Gastrocnemius medialis (tissue), 4 donors: ENCODE measurements at regions of chr14 and their contacts with region 1.

Region 1: DNA sequence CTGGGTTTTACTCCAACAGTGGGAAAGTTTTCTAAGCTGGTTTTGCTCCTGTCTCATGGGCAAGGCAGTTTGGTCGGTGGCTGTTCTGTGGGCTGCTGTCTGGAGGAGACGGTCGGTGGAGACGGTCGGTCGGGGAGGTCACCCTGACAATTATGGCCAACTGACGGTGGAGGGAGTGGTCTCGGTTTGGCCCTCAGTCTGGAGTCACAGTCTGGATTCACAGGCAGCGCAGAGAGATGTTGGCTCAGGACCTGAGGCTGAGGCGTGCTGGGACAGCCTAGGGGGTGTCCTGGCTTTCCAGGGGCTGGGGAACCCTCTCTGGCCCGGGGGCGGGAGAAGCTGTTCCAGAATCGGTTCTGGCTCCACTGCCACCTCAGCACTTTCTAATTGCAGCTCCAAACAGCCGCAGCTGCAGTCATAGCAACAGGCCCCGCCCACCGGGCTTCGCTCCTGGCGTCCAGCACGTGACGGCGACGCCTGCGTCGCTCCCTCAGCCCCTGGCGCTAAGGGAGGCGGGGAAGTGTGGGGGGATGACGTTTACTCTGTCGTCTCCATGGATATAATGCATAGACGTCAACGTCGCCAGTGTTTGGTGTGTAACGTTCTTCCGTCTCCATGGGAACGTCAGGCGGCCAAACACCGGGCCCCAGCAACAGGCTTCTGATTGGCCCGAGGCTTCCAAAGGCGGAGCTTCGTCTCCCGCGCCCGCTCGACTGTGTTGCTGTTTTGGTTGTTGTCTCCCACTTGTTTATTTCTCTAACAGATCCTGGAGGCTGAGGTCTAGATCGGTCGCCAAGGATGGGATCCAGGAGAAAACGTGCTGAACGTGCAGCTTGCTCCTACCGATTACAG is 19.8 kb upstream of the FOS start:
- DNase-seq: peak; percentile 97 to 99
- ATAC-seq: peak; percentile 81 to 83
- H3K4me3 ChIP-seq: peak overlapping the region; percentile 43 to 64 (median 54)
- H3K27ac ChIP-seq: peak overlapping the region; percentile 86 to 96 (median 91)
- H3K4me1 ChIP-seq: peaks cover 31 to 45% of the 10 kb centered on the region in 2 donors
- H3K27me3 ChIP-seq: no peaks in the 10 kb centered on the region
- CTCF ChIP-seq: no peak
- POLR2A ChIP-seq: peak; percentile 64 to 82

Region 2: DNA sequence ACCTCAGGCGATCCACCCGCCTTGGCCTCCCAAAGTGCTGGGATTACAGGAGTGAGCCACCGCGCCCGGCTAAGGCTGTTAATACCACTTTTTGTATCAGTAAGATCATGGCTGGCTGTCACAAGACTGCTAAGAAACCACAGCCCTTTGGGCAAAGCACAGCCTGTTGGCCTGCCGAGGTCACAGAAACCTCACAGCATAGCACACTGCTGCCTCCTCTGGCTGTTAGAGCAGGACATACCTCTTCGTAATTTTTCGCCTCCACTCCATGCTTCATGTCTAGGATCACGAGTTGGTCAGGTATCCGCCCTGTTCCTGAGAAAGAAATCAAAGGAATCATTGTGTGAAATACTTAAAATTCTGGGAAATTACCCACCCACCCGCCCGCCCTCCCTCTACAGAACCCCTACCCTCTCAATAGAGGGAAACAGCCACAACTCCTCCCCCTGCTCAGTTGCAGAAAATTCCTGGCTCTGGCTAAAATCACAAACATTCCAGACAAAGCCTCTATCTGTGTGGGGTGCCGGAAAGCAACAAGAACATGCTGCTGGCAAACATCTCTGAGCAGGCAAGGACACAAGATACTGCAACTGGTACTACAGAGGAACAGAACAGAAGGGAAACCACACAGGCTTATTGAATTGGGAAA is 111.3 kb before region 1 on chr14:
- in situ Hi-C with region 1: loop called in 1 of 4 experiments (anchors 10 kb)
- intact Hi-C with region 1: loop called (anchors 2 kb)
- DNase-seq: peak; percentile 75 to 80
- ATAC-seq: peak; percentile 38 to 49
- H3K4me3 ChIP-seq: peak overlapping the region in 1 of 4 donors; percentile 15
- H3K27ac ChIP-seq: peak overlapping the region; percentile 89 to 95 (median 92)
- H3K4me1 ChIP-seq: peaks cover 81 to 83% of the 10 kb centered on the region in 2 donors
- H3K27me3 ChIP-seq: no peaks in the 10 kb centered on the region
- CTCF ChIP-seq: peak in 2 of 5 experiments; percentile 21 to 29
- POLR2A ChIP-seq: peak in 1 of 2 donors; percentile 11

Region 3: DNA sequence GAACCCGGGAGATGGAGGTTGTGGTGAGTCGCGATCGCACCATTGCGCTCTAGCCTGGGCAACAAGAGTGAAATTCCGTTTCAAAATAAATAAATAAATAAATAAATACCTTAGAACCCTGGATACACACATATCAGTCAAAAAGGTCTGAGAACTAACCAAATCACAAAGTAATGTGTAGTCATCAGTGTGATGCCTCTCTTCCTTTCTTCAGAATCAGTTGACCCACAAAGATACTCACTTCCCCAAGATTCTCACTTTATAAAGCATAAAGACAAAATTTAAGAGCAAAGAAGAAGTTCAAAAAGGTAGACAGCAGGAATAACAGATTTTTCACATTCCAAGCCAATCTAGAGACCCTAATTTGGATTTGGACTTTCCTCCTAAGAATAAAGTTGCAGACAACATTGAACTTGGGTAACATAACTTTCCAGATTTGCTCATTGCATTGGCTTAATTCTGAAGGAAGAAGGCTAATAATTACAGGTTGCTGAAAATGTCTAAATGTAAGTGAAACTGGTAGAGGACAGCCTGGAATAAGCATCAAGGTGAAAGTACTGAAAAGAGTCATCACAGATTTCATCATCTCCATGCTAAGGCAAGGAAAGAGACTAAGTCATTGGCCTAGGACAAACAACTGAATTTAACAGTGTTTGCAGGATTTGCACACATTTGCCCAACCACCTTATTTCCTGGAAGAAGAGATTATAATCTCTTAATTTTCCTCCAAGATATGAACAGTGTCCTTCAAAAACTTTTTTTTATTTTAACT is 99.8 kb before region 1 on chr14:
- in situ Hi-C with region 1: loop called in 1 of 4 experiments (anchors 10 kb)
- intact Hi-C with region 1: no loop called
- DNase-seq: no peak
- ATAC-seq: peak; percentile 30 to 67
- H3K4me3 ChIP-seq: no peak overlapping the region
- H3K27ac ChIP-seq: peak overlapping the region; percentile 49 to 71 (median 57)
- H3K4me1 ChIP-seq: peaks cover 23 to 34% of the 10 kb centered on the region in 2 donors
- H3K27me3 ChIP-seq: no peaks in the 10 kb centered on the region
- CTCF ChIP-seq: no peak
- POLR2A ChIP-seq: no peak

Region 4: GRCh38 chr14:75176142-75176820 is 82.6 kb before region 1 on chr14 and contains the start of gene TMED10:
- in situ Hi-C with region 1: no loop called
- intact Hi-C with region 1: loop called (anchors 1 kb)
- DNase-seq: peak; percentile 86 to 87
- ATAC-seq: peak; percentile 93
- H3K4me3 ChIP-seq: peak within 1 kb of the TSS; percentile 78 to 97 (median 92)
- H3K27ac ChIP-seq: peak within 1 kb of the TSS; percentile 98 to 100 (median 98)
- H3K4me1 ChIP-seq: peaks cover 33 to 35% of the 10 kb centered on the region in 2 donors
- H3K27me3 ChIP-seq: no peaks in the 10 kb centered on the region
- CTCF ChIP-seq: peak in 2 of 5 experiments; percentile 12 to 15
- POLR2A ChIP-seq: peak; percentile 84 to 88
- total RNA-seq, gene TMED10: 161 to 362 (median 255) TPM

Region 5: DNA sequence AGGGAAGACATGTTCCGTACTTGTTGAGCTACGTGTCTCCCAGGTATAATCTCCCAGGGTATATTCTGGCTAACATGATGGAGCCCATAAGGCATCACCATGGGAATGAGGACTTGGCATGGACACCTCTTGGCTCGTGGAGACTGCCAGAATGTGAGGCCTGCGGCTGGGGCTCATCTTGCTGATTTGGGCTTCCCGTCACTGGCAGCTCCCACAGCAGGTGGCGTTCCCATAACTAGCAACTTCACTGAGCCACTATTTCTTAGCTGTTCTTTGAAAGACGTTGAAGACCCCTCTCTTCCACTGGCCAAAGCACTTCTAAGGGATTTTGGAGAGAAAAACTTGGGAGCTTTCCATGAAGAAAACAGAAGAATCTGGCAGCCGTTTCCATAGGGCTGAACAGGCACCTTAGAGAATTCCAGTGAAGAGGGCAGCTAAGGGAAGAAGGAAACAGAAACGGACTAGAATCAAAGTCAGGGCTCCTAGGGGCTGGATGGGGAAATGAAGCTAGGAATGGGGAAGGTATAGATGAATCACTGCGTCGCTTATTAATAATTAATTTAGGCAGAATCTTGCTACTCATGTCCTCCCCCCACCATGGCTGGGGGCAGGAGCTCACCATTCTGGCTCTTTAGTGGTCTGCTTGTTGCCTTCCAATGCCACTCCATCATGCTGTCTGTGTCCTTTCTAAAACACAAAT is 19.9 kb before region 1 on chr14:
- in situ Hi-C with region 1: no loop called
- intact Hi-C with region 1: loop called (anchors 1 kb)
- DNase-seq: no peak
- ATAC-seq: no peak
- H3K4me3 ChIP-seq: no peak overlapping the region
- H3K27ac ChIP-seq: peak overlapping the region; percentile 87 to 98 (median 93)
- H3K4me1 ChIP-seq: peaks cover 40 to 43% of the 10 kb centered on the region in 2 donors
- H3K27me3 ChIP-seq: no peaks in the 10 kb centered on the region
- CTCF ChIP-seq: peak in 4 of 5 experiments; percentile 14 to 37 (median 22)
- POLR2A ChIP-seq: no peak

Region 6: DNA sequence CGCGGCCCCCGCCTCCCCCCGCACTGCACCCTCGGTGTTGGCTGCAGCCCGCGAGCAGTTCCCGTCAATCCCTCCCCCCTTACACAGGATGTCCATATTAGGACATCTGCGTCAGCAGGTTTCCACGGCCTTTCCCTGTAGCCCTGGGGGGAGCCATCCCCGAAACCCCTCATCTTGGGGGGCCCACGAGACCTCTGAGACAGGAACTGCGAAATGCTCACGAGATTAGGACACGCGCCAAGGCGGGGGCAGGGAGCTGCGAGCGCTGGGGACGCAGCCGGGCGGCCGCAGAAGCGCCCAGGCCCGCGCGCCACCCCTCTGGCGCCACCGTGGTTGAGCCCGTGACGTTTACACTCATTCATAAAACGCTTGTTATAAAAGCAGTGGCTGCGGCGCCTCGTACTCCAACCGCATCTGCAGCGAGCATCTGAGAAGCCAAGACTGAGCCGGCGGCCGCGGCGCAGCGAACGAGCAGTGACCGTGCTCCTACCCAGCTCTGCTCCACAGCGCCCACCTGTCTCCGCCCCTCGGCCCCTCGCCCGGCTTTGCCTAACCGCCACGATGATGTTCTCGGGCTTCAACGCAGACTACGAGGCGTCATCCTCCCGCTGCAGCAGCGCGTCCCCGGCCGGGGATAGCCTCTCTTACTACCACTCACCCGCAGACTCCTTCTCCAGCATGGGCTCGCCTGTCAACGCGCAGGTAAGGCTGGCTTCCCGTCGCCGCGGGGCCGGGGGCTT is 19.8 kb after region 1 on chr14 and contains the start of gene FOS:
- in situ Hi-C with region 1: no loop called
- intact Hi-C with region 1: loop called (anchors 1 kb)
- DNase-seq: peak; percentile 92 to 93
- ATAC-seq: peak; percentile 76 to 80
- H3K4me3 ChIP-seq: peak within 1 kb of the TSS; percentile 84 to 95 (median 90)
- H3K27ac ChIP-seq: peak within 1 kb of the TSS; percentile 98 to 100 (median 100)
- H3K4me1 ChIP-seq: peaks cover 27 to 30% of the 10 kb centered on the region in 2 donors
- H3K27me3 ChIP-seq: no peaks in the 10 kb centered on the region
- CTCF ChIP-seq: peak in 1 of 5 experiments; percentile 19
- POLR2A ChIP-seq: peak; percentile 99 to 100
- total RNA-seq, gene FOS: 16.3 to 110 (median 53.5) TPM

Region 7: DNA sequence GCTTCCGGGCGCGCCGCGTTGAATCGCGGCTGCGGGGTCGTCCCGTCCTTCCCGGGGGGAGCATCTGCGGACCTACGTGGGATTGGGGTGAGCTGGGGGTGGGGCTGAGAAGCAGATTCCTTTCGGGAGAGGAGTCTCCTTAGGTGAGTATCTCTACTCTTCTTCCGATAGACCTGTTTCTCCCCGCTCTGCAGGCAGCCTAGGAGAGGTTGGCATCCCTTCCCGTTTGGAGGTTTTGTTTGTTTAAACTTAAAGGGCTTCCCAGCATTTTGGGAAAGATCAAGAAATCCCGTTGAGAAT is 402.6 kb after region 1 on chr14:
- in situ Hi-C with region 1: no loop called
- intact Hi-C with region 1: no loop called
- DNase-seq: no peak
- ATAC-seq: peak in 1 of 2 donors; percentile 0
- H3K4me3 ChIP-seq: peak overlapping the region; percentile 72 to 98 (median 85)
- H3K27ac ChIP-seq: peak overlapping the region; percentile 77 to 86 (median 82)
- H3K4me1 ChIP-seq: peaks cover 27 to 41% of the 10 kb centered on the region in 2 donors
- H3K27me3 ChIP-seq: no peaks in the 10 kb centered on the region
- CTCF ChIP-seq: no peak
- POLR2A ChIP-seq: no peak